CD8-positive, alpha-beta T cell (primary cell): ENCODE measurements at regions of chr1 and their contacts with region 1.

Region 1: DNA sequence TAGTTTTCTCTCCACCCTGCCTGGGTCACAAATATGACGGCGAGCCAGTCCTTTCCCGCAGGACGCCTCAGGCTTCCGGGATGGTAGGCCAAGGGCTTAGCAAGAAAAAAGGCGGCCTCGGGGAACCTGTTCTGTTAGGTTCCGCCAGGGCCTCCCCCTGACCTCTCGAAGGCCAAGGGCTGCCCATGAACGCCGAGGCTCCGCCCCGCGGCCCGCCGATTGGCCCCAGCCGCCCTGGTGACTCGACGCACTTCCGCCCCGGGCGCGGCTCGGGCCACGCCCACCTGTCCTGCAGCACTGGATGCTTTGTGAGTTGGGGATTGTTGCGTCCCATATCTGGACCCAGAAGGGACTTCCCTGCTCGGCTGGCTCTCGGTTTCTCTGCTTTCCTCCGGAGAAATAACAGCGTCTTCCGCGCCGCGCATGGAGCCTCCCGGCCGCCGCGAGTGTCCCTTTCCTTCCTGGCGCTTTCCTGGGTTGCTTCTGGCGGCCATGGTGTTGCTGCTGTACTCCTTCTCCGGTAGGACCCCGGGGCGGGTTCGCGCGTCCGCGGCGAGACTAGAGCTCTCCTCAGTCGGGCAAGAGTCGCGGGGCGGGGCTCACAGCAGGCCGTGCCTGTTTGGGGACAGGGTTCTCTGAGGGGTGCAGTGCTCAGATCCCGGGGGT is at the start of gene CD46:
- DNase-seq: peak; percentile 85 to 97 (median 94)
- ATAC-seq: peak; percentile 95
- H3K4me3 ChIP-seq: peak within 1 kb of the TSS; percentile 76 to 91
- H3K4me3 Mint-ChIP-seq: peak within 1 kb of the TSS; percentile 100
- H3K27ac ChIP-seq: peak within 1 kb of the TSS; percentile 58 to 90
- H3K27ac Mint-ChIP-seq: peak within 1 kb of the TSS; percentile 97
- H3K4me1 ChIP-seq: peaks cover 51% of the 10 kb centered on the region
- H3K4me1 Mint-ChIP-seq: peaks cover 81% of the 10 kb centered on the region
- H3K27me3 ChIP-seq: no peaks in the 10 kb centered on the region
- H3K27me3 Mint-ChIP-seq: no peaks in the 10 kb centered on the region
- CTCF ChIP-seq: no peak
- total RNA-seq, gene CD46: 108 to 109 TPM

Region 2: DNA sequence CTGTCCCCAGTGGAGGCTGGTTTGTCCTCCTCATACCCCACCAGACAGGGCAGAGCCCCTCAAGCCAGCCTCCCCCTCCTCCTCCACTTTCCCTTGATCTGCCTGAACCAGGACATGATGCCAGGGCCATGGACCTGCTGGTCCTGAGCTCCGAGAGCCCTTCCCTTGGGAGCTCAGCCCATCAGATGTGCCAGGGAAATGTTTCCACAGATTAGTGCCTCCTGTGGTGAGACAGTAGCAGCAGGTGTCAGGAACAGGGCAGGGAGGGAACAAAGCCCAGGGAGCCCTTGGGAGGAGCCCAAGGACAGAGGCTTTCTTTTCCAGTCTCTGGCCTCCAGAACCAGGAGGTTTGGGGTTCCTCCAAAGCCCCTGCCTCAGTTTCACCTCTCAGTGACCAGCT is 1924.3 kb before region 1 on chr1:
- CTCF ChIA-PET with region 1: no interaction called
- POLR2A ChIA-PET with region 1: no interaction called
- intact Hi-C with region 1: loop called in 1 of 2 experiments (anchors 5 kb)
- DNase-seq: no peak
- ATAC-seq: no peak
- H3K4me3 ChIP-seq: no peak overlapping the region
- H3K4me3 Mint-ChIP-seq: no peak overlapping the region
- H3K27ac ChIP-seq: no peak overlapping the region
- H3K27ac Mint-ChIP-seq: no peak overlapping the region
- H3K4me1 ChIP-seq: no peaks in the 10 kb centered on the region
- H3K4me1 Mint-ChIP-seq: peaks cover 6% of the 10 kb centered on the region
- H3K27me3 ChIP-seq: no peaks in the 10 kb centered on the region
- H3K27me3 Mint-ChIP-seq: no peaks in the 10 kb centered on the region
- CTCF ChIP-seq: no peak

Region 3: GRCh38 chr1:207719234-207719633 is 32.7 kb before region 1 on chr1:
- CTCF ChIA-PET with region 1: no interaction called
- POLR2A ChIA-PET with region 1: no interaction called
- intact Hi-C with region 1: loop called in 1 of 2 experiments (anchors 5 kb)
- DNase-seq: no peak
- ATAC-seq: no peak
- H3K4me3 ChIP-seq: no peak overlapping the region
- H3K4me3 Mint-ChIP-seq: no peak overlapping the region
- H3K27ac ChIP-seq: no peak overlapping the region
- H3K27ac Mint-ChIP-seq: no peak overlapping the region
- H3K4me1 ChIP-seq: no peaks in the 10 kb centered on the region
- H3K4me1 Mint-ChIP-seq: no peaks in the 10 kb centered on the region
- H3K27me3 ChIP-seq: no peaks in the 10 kb centered on the region
- H3K27me3 Mint-ChIP-seq: no peaks in the 10 kb centered on the region
- CTCF ChIP-seq: no peak

Region 4: GRCh38 chr1:207762622-207763021 is 10.7 kb after region 1 on chr1:
- CTCF ChIA-PET with region 1: no interaction called
- POLR2A ChIA-PET with region 1: no interaction called
- intact Hi-C with region 1: no loop called
- DNase-seq: no peak
- ATAC-seq: no peak
- H3K4me3 ChIP-seq: no peak overlapping the region
- H3K4me3 Mint-ChIP-seq: no peak overlapping the region
- H3K27ac ChIP-seq: no peak overlapping the region
- H3K27ac Mint-ChIP-seq: no peak overlapping the region
- H3K4me1 ChIP-seq: no peaks in the 10 kb centered on the region
- H3K4me1 Mint-ChIP-seq: peaks cover 9% of the 10 kb centered on the region
- H3K27me3 ChIP-seq: no peaks in the 10 kb centered on the region
- H3K27me3 Mint-ChIP-seq: no peaks in the 10 kb centered on the region
- CTCF ChIP-seq: no peak